ENCODE measurements at regions of chr5 and their contacts with region 1.

Region 1: GRCh38 chr5:174311531-174312269 is 266.2 kb downstream of the NSG2 start:
- DNase-seq: peak; percentile 87

Region 2: DNA sequence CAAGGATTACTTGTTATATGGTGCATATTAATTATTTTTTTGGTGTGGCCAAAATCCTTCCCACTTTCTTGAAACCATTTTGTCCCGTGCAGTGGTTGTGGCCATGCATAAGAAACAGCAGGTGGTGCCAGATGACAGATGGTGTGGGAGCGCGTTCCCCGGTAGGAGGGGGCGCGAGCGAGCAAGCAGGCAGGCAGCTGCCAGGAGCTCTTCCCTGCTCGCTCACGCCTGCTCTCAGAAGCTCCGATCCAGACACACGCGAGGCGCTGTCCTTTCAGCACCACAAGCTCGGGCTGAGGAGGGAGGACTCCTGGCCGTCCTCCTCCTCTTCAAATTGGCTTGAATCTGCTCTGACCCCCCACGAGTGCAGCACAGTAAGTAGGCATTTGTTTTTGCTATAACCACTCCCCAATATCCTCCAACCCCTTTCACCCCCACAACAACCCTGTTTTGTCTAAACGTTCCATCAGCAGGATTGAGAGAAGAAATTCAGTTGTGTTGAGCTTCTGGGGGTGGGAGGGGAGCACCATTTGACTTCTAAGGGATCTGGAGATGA is 266.2 kb before region 1 on chr5 and contains the start of gene NSG2:
- CTCF ChIA-PET with region 1: interaction called, 52 read pairs
- POLR2A ChIA-PET with region 1: interaction called, 13 read pairs
- DNase-seq: peak; percentile 97

Region 3: DNA sequence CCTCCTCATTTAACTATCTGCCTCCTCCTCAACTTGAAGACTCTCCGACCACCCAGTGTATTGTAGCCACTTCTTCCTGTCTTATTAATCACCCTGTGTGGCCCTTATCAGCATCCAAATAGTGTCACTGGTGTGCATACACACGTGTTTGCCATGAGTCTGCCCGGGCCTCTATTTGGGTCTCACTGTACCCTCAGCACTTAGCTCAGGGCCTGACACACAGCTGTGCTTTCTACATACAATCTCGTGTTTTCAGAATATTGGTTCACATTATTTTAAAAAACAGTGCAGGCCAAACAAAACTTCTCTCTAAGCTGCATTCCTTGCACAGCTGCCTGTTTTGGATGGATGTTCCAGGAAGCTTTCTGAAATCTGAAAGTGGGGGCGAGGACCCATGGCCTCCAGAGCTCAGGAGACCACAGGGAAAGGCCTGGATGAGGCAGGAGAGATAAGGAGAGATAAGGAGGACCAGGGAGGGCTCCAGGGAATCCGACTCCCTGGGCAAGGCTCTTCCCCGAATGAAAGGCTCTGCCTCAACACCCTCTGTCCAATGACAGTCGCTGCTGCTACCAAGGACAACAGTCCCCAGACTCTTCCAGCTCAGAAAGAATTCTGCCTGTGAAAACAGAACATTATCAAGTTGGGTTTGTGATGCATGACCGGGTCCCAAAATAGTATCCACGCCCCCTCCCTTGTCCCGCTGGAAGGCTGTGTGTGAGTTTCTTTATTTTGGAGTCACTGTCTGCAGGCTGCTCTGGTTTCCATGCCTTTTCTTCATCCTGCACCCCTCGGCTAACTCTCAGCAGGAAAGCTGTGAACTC is 10.5 kb before region 1 on chr5:
- CTCF ChIA-PET with region 1: interaction called, 14 read pairs
- POLR2A ChIA-PET with region 1: no interaction called
- DNase-seq: no peak

Measured in HEK293T (cell line).